Caco-2 (cell line): ENCODE measurements at regions of chr3 and their contacts with region 1.

Region 1: GRCh38 chr3:113136071-113136470 is 75.3 kb upstream of the BOC start:
- DNase-seq: no peak
- H3K4me3 ChIP-seq: no peak overlapping the region
- H3K4me3 Mint-ChIP-seq: no peak overlapping the region
- H3K27ac Mint-ChIP-seq: no peak overlapping the region
- H3K4me1 ChIP-seq: no peaks in the 10 kb centered on the region
- H3K4me1 Mint-ChIP-seq: no peaks in the 10 kb centered on the region
- H3K27me3 ChIP-seq: no peaks in the 10 kb centered on the region
- H3K27me3 Mint-ChIP-seq: peaks cover 4% of the 10 kb centered on the region
- CTCF ChIP-seq: peak; percentile 32 to 45

Region 2: DNA sequence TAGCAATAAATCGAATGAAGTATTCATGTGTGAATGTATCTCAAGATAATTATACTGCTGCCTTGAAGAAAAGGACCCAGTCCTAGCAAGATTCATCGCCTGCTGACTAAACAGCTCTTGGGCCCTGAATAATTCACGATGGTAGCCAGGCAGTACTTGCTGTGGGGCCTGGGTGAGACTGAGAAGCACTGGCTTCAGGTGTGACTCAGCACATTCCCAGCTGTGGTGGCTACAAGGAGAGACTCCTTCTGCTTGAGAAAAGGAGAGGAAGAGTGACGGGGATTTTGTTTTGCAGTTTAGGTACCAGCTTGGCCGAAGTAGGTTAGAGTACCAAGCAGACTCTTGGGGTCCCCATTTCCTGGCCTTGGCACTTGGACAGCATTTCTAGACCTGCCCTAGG is 241.8 kb before region 1 on chr3:
- CTCF ChIA-PET with region 1: no interaction called
- POLR2A ChIA-PET with region 1: no interaction called
- intact Hi-C with region 1: no loop called
- DNase-seq: peak; percentile 6 to 43
- H3K4me3 ChIP-seq: no peak overlapping the region
- H3K4me3 Mint-ChIP-seq: no peak overlapping the region
- H3K27ac Mint-ChIP-seq: no peak overlapping the region
- H3K4me1 ChIP-seq: no peaks in the 10 kb centered on the region
- H3K4me1 Mint-ChIP-seq: no peaks in the 10 kb centered on the region
- H3K27me3 ChIP-seq: no peaks in the 10 kb centered on the region
- H3K27me3 Mint-ChIP-seq: no peaks in the 10 kb centered on the region
- CTCF ChIP-seq: no peak

Region 3: DNA sequence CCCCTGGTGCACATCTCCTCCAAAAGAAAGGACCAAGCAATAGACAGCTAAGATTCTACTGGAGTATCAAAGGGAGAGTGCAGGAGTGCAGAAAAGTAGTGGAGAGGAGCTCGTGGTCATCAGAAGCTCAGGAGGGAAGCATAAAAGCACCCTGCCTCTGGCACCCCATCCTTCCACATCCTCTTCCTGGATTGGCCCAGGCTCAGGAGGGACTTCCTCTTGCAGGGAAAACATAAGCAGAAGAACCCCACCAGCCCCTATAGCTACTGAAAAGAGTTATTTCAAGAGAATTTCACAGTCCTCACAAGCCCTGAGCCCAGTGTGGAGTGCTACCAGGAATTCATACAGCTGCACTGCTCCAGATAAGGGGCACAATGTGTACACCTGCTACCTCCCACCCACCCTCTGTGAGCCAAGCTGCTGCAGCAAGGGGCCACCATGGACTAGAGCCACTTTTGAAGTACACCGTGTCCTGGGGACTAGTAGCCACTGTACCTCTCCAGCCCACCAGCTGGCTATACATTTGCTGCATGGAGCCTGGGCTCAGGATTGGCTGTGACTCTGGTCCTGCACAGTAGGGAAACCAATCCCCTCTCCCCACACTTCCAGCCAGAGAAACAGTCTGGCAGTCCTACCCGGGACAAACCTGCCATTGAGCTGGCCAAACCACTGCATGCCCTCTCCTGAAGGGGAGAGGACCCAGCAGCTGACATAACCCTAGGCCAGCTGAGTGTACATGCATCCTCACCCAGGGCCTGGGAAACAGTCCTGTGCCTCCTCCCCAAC is 204.1 kb before region 1 on chr3:
- CTCF ChIA-PET with region 1: no interaction called
- POLR2A ChIA-PET with region 1: no interaction called
- intact Hi-C with region 1: no loop called
- DNase-seq: no peak
- H3K4me3 ChIP-seq: no peak overlapping the region
- H3K4me3 Mint-ChIP-seq: no peak overlapping the region
- H3K27ac Mint-ChIP-seq: no peak overlapping the region
- H3K4me1 ChIP-seq: no peaks in the 10 kb centered on the region
- H3K4me1 Mint-ChIP-seq: no peaks in the 10 kb centered on the region
- H3K27me3 ChIP-seq: no peaks in the 10 kb centered on the region
- H3K27me3 Mint-ChIP-seq: no peaks in the 10 kb centered on the region
- CTCF ChIP-seq: no peak

Region 4: DNA sequence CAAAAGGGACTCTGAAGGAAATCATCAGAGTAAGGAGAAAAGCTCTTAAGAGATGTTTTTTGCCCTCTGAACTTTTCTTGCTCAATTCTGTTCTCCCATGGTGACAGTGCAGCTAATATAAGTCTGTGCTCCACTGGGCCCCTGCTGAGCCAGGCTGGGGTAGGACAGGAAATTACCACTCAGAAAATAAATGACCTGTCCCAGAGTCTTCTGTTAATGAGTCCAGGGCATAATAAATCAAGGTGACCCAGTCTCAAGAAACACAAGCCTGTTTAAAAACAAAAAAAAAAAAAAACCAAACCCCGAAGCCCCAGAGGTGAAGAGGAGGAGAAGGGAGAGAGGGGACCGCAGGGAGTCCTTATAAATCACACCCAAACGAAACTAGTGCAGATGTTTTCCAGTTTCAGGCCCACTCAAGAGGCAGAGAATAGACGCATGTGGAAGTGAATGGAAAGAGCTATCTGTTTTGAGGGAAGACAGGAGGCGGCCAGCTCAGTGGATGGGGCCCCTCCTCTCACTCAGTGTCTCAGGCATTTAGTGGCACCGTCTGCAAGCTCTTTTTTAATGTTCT is 15.5 kb after region 1 on chr3:
- CTCF ChIA-PET with region 1: no interaction called
- POLR2A ChIA-PET with region 1: no interaction called
- intact Hi-C with region 1: no loop called
- DNase-seq: no peak
- H3K4me3 ChIP-seq: no peak overlapping the region
- H3K4me3 Mint-ChIP-seq: no peak overlapping the region
- H3K27ac Mint-ChIP-seq: no peak overlapping the region
- H3K4me1 ChIP-seq: no peaks in the 10 kb centered on the region
- H3K4me1 Mint-ChIP-seq: no peaks in the 10 kb centered on the region
- H3K27me3 ChIP-seq: no peaks in the 10 kb centered on the region
- H3K27me3 Mint-ChIP-seq: no peaks in the 10 kb centered on the region
- CTCF ChIP-seq: no peak

Region 5: DNA sequence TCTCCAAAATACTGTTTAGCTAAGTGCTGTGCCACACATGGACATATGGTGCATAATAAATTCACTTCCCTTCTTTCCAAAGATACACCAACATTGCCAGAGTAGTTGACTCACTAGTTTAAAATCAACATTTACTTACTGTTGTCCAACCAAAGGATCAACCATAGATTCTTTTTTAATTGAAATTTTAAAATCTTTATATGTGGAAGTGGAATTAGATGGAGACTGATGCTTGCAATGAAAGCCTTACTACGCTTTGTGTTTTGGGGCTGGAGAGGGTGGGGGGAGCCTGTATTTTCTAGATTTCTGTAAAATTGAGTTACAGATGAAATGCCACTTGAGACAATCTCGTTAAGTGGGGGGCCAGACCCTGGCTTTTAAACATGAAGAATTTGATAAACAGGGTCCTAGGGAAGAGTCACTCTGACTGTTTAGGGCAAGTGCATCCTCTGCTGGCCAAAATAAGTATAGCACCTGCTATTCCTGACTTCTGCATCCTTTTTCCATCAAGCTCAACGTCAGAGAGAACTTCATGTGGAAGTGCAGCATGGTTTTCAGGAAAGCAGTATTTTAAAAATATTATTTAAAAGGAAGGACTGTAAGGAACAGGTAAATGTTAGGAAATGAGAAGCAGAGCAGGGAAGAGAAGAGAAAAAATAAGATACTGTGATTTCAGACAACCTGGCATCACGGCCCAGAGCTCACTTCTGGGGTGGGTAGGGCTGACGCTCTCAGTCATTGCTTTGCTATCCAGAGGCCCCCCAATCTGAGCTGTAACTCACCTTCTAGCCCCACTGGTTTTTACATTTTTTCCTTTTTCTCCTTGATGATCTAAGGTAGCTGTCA is 152.0 kb after region 1 on chr3:
- CTCF ChIA-PET with region 1: interaction called, 9 read pairs
- POLR2A ChIA-PET with region 1: no interaction called
- intact Hi-C with region 1: loop called (anchors 1 kb)
- DNase-seq: peak in 1 of 2 experiments; percentile 58
- H3K4me3 ChIP-seq: no peak overlapping the region
- H3K4me3 Mint-ChIP-seq: no peak overlapping the region
- H3K27ac Mint-ChIP-seq: no peak overlapping the region
- H3K4me1 ChIP-seq: no peaks in the 10 kb centered on the region
- H3K4me1 Mint-ChIP-seq: peaks cover under 1% of the 10 kb centered on the region
- H3K27me3 ChIP-seq: no peaks in the 10 kb centered on the region; the same call in 1 of the 2 replicates
- H3K27me3 Mint-ChIP-seq: peaks cover 5% of the 10 kb centered on the region
- CTCF ChIP-seq: peak; percentile 95 to 98

Region 6: DNA sequence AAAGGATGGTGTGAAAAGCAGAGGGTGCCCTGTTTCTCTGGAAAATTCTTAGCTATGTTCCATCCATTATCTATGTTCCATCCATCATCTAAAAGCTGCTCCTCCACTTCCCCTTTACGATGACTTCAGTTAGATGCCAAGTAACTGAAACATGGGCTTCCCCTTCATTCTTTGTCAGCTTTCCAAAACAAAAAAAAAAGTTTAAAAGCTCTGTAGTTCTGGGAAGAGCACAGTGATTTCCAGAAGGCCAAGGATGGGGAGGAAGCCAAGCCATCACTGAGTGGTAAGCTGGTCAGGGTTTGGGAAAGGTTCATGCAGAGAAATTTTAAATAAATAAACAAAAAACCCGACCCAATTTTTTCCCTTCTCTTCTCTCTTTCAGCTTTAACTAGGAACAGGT is 193.7 kb after region 1 on chr3:
- CTCF ChIA-PET with region 1: no interaction called
- POLR2A ChIA-PET with region 1: no interaction called
- intact Hi-C with region 1: no loop called
- DNase-seq: no peak
- H3K4me3 ChIP-seq: no peak overlapping the region
- H3K4me3 Mint-ChIP-seq: no peak overlapping the region
- H3K27ac Mint-ChIP-seq: no peak overlapping the region
- H3K4me1 ChIP-seq: no peaks in the 10 kb centered on the region
- H3K4me1 Mint-ChIP-seq: no peaks in the 10 kb centered on the region
- H3K27me3 ChIP-seq: no peaks in the 10 kb centered on the region
- H3K27me3 Mint-ChIP-seq: no peaks in the 10 kb centered on the region
- CTCF ChIP-seq: no peak